ENCODE measurements at regions of chr11 and their contacts with region 1.

Region 1: GRCh38 chr11:2930704-2931428 is 1.6 kb upstream of the PHLDA2 start:
- DNase-seq: peak in 1 of 5 donors; percentile 30
- H3K4me3 ChIP-seq: peak overlapping the region; percentile 54 to 59
- H3K4me3 Mint-ChIP-seq: peak overlapping the region; percentile 65 to 89 (median 83)
- H3K27ac ChIP-seq: no peak overlapping the region
- H3K27ac Mint-ChIP-seq: peak overlapping the region in 6 of 7 donors; percentile 78 to 92 (median 84)
- H3K4me1 ChIP-seq: peaks cover 40% of the 10 kb centered on the region
- H3K4me1 Mint-ChIP-seq: peaks cover 12 to 44% (median 17%) of the 10 kb centered on the region in 4 donors
- H3K27me3 ChIP-seq: no peaks in the 10 kb centered on the region
- H3K27me3 Mint-ChIP-seq: peaks cover 3 to 4% of the 10 kb centered on the region in 2 donors

Region 2: GRCh38 chr11:2846056-2846455 is 84.8 kb before region 1 on chr11:
- CTCF ChIA-PET with region 1: no interaction called
- POLR2A ChIA-PET with region 1: no interaction called
- intact Hi-C with region 1: no loop called
- DNase-seq: no peak
- H3K4me3 ChIP-seq: no peak overlapping the region
- H3K4me3 Mint-ChIP-seq: no peak overlapping the region
- H3K27ac ChIP-seq: no peak overlapping the region
- H3K27ac Mint-ChIP-seq: no peak overlapping the region
- H3K4me1 ChIP-seq: no peaks in the 10 kb centered on the region
- H3K4me1 Mint-ChIP-seq: peaks cover 0 to 11% (median 2%) of the 10 kb centered on the region in 4 donors
- H3K27me3 ChIP-seq: no peaks in the 10 kb centered on the region
- H3K27me3 Mint-ChIP-seq: no peaks in the 10 kb centered on the region

Region 3: GRCh38 chr11:2892215-2893020 is 38.4 kb before region 1 on chr11:
- CTCF ChIA-PET with region 1: interaction called, 27 read pairs
- POLR2A ChIA-PET with region 1: interaction called, 21 read pairs
- intact Hi-C with region 1: loop called (anchors 1 kb)
- DNase-seq: peak; percentile 50 to 66 (median 59)
- H3K4me3 ChIP-seq: peak overlapping the region in 1 of 2 donors; percentile 79
- H3K4me3 Mint-ChIP-seq: peak overlapping the region; percentile 73 to 85 (median 78)
- H3K27ac ChIP-seq: peak overlapping the region; percentile 36
- H3K27ac Mint-ChIP-seq: peak overlapping the region; percentile 82 to 93 (median 89)
- H3K4me1 ChIP-seq: peaks cover 35% of the 10 kb centered on the region
- H3K4me1 Mint-ChIP-seq: peaks cover 6 to 39% (median 24%) of the 10 kb centered on the region in 4 donors
- H3K27me3 ChIP-seq: no peaks in the 10 kb centered on the region
- H3K27me3 Mint-ChIP-seq: no peaks in the 10 kb centered on the region

Region 4: GRCh38 chr11:2945031-2945756 is 14.3 kb after region 1 on chr11:
- CTCF ChIA-PET with region 1: interaction called, 9 read pairs
- POLR2A ChIA-PET with region 1: interaction called, 10 read pairs
- intact Hi-C with region 1: no loop called
- DNase-seq: peak in 3 of 5 donors; percentile 36 to 61 (median 45)
- H3K4me3 ChIP-seq: no peak overlapping the region
- H3K4me3 Mint-ChIP-seq: peak overlapping the region in 5 of 8 donors; percentile 21 to 76 (median 59)
- H3K27ac ChIP-seq: no peak overlapping the region
- H3K27ac Mint-ChIP-seq: peak overlapping the region; percentile 42 to 91 (median 80)
- H3K4me1 ChIP-seq: peaks cover 43% of the 10 kb centered on the region
- H3K4me1 Mint-ChIP-seq: peaks cover 36 to 68% (median 52%) of the 10 kb centered on the region in 4 donors
- H3K27me3 ChIP-seq: no peaks in the 10 kb centered on the region
- H3K27me3 Mint-ChIP-seq: no peaks in the 10 kb centered on the region

Measured in CD4-positive, alpha-beta memory T cell (primary cell).